Body of pancreas (tissue), 4 donors: ENCODE measurements at regions of chr22 and their contacts with region 1.

Region 1: GRCh38 chr22:18024276-18024947 is at the start of gene MICAL3:
- DNase-seq: peak; percentile 58 to 79 (median 67)
- ATAC-seq: peak; percentile 87
- H3K4me3 ChIP-seq: peak within 1 kb of the TSS; percentile 49 to 81
- H3K27ac ChIP-seq: peak within 1 kb of the TSS; percentile 60 to 78 (median 68)
- H3K4me1 ChIP-seq: peaks cover 17% of the 10 kb centered on the region
- H3K27me3 ChIP-seq: no peaks in the 10 kb centered on the region
- CTCF ChIP-seq: peak; percentile 26 to 82 (median 65)
- POLR2A ChIP-seq: peak in 1 of 3 donors; percentile 18
- total RNA-seq, gene MICAL3: 33.6 to 34.0 TPM

Region 2: DNA sequence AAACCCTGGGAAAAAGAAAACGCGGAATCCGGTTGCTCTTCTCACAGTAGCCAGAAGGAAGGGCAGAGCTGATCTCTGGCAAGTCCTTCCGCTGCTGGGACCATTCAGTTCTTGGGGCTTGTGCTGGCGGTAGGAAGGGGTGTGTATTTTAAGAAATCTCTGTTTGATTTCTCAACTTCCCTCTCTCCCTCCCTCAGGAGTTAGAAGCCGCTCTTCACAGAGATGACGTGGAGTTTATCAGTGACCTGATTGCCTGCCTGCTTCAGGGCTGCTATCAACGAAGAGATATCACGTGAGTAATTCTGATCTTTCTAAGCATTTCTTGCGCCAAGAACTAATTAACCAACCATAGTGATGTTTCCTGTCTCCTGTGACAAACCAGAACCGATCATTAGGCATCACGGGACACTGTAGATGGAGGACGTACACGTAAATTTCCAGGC is 547.0 kb before region 1 on chr22:
- intact Hi-C with region 1: no loop called
- DNase-seq: peak in 2 of 4 donors; percentile 30
- ATAC-seq: peak; percentile 27
- H3K4me3 ChIP-seq: no peak overlapping the region
- H3K27ac ChIP-seq: no peak overlapping the region
- H3K4me1 ChIP-seq: no peaks in the 10 kb centered on the region
- H3K27me3 ChIP-seq: no peaks in the 10 kb centered on the region
- CTCF ChIP-seq: no peak
- POLR2A ChIP-seq: no peak

Region 3: GRCh38 chr22:17903564-17904295 is 120.7 kb before region 1 on chr22:
- intact Hi-C with region 1: loop called (anchors 10 kb)
- DNase-seq: peak; percentile 23 to 70 (median 48)
- ATAC-seq: peak; percentile 67
- H3K4me3 ChIP-seq: no peak overlapping the region
- H3K27ac ChIP-seq: peak overlapping the region in 3 of 4 donors; percentile 5 to 38 (median 27)
- H3K4me1 ChIP-seq: peaks cover 14% of the 10 kb centered on the region
- H3K27me3 ChIP-seq: no peaks in the 10 kb centered on the region
- CTCF ChIP-seq: peak in 3 of 7 experiments; percentile 26 to 39 (median 27)
- POLR2A ChIP-seq: no peak